ENCODE measurements at regions of chr6 and their contacts with region 1.

Region 1: GRCh38 chr6:15879382-15880261 is 216.8 kb upstream of the DTNBP1 start:
- DNase-seq: peak; percentile 87
- ATAC-seq: peak; percentile 71
- H3K4me3 Mint-ChIP-seq: peak overlapping the region; percentile 18
- H3K27ac Mint-ChIP-seq: peak overlapping the region; percentile 52
- H3K4me1 Mint-ChIP-seq: peaks cover 42% of the 10 kb centered on the region
- H3K27me3 Mint-ChIP-seq: no peaks in the 10 kb centered on the region

Region 2: GRCh38 chr6:15691250-15691869 is 188.3 kb before region 1 on chr6:
- CTCF ChIA-PET with region 1: interaction called, 9 read pairs
- POLR2A ChIA-PET with region 1: no interaction called
- intact Hi-C with region 1: loop called (anchors 2 to 5 kb)
- DNase-seq: peak; percentile 91
- ATAC-seq: peak; percentile 99
- H3K4me3 Mint-ChIP-seq: no peak overlapping the region
- H3K27ac Mint-ChIP-seq: peak overlapping the region; percentile 61
- H3K4me1 Mint-ChIP-seq: peaks cover 14% of the 10 kb centered on the region
- H3K27me3 Mint-ChIP-seq: peaks cover 7% of the 10 kb centered on the region

Region 3: DNA sequence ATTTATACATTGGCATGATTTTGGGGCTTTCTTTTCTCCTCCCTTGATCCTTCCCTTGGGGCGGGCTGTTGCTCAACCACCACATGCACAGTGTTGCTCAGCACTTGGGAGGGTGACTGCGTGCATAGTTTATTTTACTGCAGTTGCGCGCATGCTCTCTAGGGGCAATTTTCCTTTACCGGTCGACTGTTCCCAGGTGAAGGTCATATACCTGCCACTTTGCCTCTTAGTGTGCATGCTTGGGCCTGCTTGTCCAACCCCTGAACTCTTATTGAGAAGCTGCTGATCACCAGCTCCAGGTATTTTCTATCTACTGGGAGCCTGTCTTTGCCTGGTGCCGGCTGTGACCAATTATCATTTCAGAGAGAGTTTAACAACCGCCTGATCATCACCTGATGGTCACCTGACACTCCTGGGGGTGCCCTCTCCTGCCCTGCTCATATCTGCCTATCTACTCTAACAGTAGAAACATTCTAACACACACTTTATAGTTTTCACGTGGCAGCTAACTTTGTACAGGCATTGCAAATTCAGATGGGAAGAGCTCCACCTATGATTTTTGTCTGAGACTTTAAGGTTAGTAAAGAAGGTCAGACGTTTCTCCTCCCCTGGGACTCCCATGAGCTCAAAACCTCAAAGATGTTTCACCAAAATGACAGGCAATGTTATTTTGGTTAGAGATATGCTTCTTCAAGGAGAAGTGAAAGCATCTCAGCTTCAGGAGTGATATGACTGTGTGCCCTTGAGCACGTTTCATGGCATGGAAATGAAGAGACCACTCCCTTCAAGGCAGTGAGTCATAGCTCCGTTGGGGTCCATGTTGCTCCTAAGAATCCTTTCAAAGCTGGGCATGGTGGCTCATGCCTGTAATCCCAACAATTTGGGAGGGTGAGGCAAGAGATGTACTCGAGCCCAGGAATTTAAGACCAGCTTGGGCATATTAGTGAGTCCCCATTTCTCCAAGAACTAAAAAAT is 21.8 kb after region 1 on chr6:
- CTCF ChIA-PET with region 1: interaction called, 9 read pairs
- POLR2A ChIA-PET with region 1: interaction called, 7 read pairs
- intact Hi-C with region 1: loop called (anchors 1 kb)
- DNase-seq: peak; percentile 59
- ATAC-seq: peak; percentile 96
- H3K4me3 Mint-ChIP-seq: peak overlapping the region; percentile 9
- H3K27ac Mint-ChIP-seq: peak overlapping the region; percentile 73
- H3K4me1 Mint-ChIP-seq: peaks cover 38% of the 10 kb centered on the region
- H3K27me3 Mint-ChIP-seq: peaks cover 2% of the 10 kb centered on the region

Region 4: DNA sequence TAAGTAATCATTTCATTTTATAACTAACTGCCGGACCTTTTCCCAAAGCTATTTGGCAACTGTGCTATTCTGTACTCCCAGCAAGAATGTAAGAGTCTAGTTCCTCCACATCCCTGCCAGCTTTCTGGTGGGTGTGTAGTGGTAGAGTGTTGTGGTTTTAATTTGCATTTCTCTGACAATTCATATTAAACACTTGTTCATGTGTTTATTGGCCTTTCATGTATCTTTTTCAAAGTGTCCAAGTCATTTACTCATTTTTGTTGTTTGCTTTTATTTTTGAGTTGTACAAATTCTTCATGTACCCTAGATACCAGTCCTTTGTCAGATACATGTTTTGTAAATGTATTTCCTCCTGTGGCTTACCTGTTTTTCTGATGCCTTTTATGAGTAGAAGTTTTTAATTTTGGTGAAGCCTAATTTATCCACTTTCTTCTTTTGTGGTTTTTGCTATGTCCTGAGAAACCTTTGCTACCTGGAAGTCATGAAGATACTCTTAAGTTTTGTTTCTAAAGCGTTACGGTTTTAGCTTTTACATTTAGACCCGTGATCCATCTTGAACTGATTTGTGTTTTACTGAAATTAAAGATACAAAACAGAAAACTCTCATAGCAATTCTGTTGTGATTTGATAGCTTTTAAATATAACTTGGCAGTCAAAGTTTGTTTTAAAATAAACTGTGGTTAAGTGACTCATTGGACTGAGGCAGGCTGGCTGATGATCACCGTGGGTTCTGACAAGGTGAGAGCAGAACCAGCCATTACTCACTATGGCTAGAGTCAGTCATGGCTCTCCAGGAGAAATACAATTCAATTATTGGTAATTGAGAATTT is 257.2 kb after region 1 on chr6:
- CTCF ChIA-PET with region 1: interaction called, 3 read pairs
- POLR2A ChIA-PET with region 1: interaction called, 4 read pairs
- intact Hi-C with region 1: loop called (anchors 2 to 5 kb)
- DNase-seq: peak; percentile 75
- ATAC-seq: peak; percentile 89
- H3K4me3 Mint-ChIP-seq: peak overlapping the region; percentile 56
- H3K27ac Mint-ChIP-seq: peak overlapping the region; percentile 86
- H3K4me1 Mint-ChIP-seq: peaks cover 79% of the 10 kb centered on the region
- H3K27me3 Mint-ChIP-seq: no peaks in the 10 kb centered on the region

Measured in activated CD4-positive, alpha-beta T cell treated with anti-CD3 and anti-CD28 coated beads for 36 hours (primary cell).